K562 (cell line): ENCODE measurements at regions of chr1 and their contacts with region 1.

Region 1: DNA sequence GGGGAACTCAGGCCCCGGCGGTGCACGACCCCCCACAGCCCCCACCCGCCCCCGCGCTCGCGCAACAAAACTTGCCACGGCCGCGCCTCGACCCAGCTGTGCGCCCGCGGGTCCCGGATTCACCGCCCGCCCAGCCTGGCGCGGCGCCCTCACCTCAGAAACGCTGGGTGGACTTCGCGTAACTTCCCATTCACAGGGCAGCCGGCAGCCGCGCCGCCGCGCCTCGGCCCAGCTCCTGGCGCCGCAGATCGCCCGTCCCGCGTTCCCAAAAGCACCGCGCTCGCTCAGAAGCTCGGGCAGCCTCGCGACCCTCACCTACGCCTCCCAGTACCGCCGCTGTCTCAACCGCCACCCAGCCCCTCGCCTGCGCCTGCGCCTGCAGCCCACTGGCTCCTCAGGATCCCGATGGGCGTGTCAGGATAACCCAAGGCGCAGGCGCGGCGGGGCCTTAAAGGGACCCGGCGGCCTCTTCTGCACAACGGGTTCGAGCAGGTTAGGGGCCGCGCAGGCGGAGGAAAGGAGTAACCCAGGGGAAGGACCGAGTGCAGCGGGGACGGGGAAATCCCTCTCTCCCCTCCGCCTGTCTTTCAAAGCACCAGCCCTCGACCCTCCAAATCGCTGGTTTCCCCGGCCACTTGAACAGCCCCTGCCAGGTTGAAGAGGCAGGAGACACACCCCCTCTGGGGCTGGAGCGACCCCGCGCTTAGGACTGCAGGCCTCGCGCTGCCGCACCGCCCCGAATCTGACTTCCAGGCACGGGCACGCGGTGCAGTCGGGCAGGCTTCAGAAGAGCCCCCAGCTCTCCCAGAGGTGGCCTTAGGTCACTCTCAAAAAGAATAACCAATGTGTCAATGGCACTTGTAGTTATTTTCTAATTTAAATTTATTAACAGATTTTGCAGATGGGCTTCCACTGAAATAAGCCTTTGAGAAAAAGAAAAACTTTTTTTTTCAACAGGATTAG is at the start of gene NBPF1:
- DNase-seq: peak; percentile 100
- ATAC-seq: peak; percentile 99
- H3K4me3 ChIP-seq: peak within 1 kb of the TSS; percentile 55
- H3K27ac ChIP-seq: peak within 1 kb of the TSS; percentile 42
- H3K4me1 ChIP-seq: peaks cover 25 to 32% of the 10 kb centered on the region in 2 experiments
- H3K27me3 ChIP-seq: no peaks in the 10 kb centered on the region
- CTCF ChIP-seq: peak in 2 of 3 experiments; percentile 30 to 32; a peak in 4 of 6 replicates
- EP300 ChIP-seq: peak; percentile 61; the same call in 1 of the 2 replicates
- POLR2A ChIP-seq: no peak
- RAD21 ChIP-seq: peak; percentile 19 to 52; a peak in 3 of 4 replicates
- polyA plus RNA-seq, gene NBPF1: 5.2 to 7.9 TPM

Region 2: GRCh38 chr1:16296643-16297042 is 316.8 kb before region 1 on chr1:
- CTCF ChIA-PET with region 1: no interaction called
- POLR2A ChIA-PET with region 1: no interaction called
- in situ Hi-C with region 1: no loop called
- intact Hi-C with region 1: no loop called
- DNase-seq: no peak
- ATAC-seq: no peak
- H3K4me3 ChIP-seq: no peak overlapping the region
- H3K27ac ChIP-seq: no peak overlapping the region
- H3K4me1 ChIP-seq: peaks cover 0 to 3% of the 10 kb centered on the region in 2 experiments; a peak in 1 of 5 replicates
- H3K27me3 ChIP-seq: no peaks in the 10 kb centered on the region
- CTCF ChIP-seq: no peak
- EP300 ChIP-seq: no peak
- POLR2A ChIP-seq: no peak
- RAD21 ChIP-seq: no peak

Region 3: GRCh38 chr1:16521288-16521583 is 92.2 kb before region 1 on chr1:
- CTCF ChIA-PET with region 1: no interaction called
- POLR2A ChIA-PET with region 1: no interaction called
- in situ Hi-C with region 1: loop called (anchors 25 kb)
- intact Hi-C with region 1: loop called (anchors 5 kb)
- DNase-seq: no peak
- ATAC-seq: no peak
- H3K4me3 ChIP-seq: no peak overlapping the region
- H3K27ac ChIP-seq: no peak overlapping the region
- H3K4me1 ChIP-seq: peaks cover 8 to 13% of the 10 kb centered on the region in 2 experiments; a peak in 4 of 5 replicates
- H3K27me3 ChIP-seq: peaks cover 7% of the 10 kb centered on the region in 2 experiments; a peak in 3 of 5 replicates
- CTCF ChIP-seq: no peak
- EP300 ChIP-seq: no peak
- POLR2A ChIP-seq: no peak
- RAD21 ChIP-seq: no peak

Region 4: GRCh38 chr1:16625497-16626408 is 12.3 kb after region 1 on chr1:
- CTCF ChIA-PET with region 1: interaction called, 8 read pairs
- POLR2A ChIA-PET with region 1: interaction called, 22 read pairs
- in situ Hi-C with region 1: no loop called
- intact Hi-C with region 1: no loop called
- DNase-seq: peak in 3 of 4 experiments; percentile 46 to 49 (median 47)
- ATAC-seq: no peak
- H3K4me3 ChIP-seq: no peak overlapping the region
- H3K27ac ChIP-seq: no peak overlapping the region
- H3K4me1 ChIP-seq: peaks cover 4 to 36% of the 10 kb centered on the region in 2 experiments; a peak in 3 of 5 replicates
- H3K27me3 ChIP-seq: no peaks in the 10 kb centered on the region
- CTCF ChIP-seq: 0 out of 6 replicates have a peak, but pooled peaks of 1 of the 3 experiments have one; percentile 2
- EP300 ChIP-seq: no peak
- POLR2A ChIP-seq: no peak; the same call in 1 of the 2 replicates
- RAD21 ChIP-seq: no peak

Region 5: GRCh38 chr1:16913833-16914662 is 300.6 kb after region 1 on chr1:
- CTCF ChIA-PET with region 1: no interaction called
- POLR2A ChIA-PET with region 1: no interaction called
- in situ Hi-C with region 1: loop called (anchors 25 kb)
- intact Hi-C with region 1: no loop called
- DNase-seq: peak; percentile 94 to 99 (median 98)
- ATAC-seq: peak; percentile 98
- H3K4me3 ChIP-seq: peak overlapping the region; percentile 68
- H3K27ac ChIP-seq: peak overlapping the region; percentile 45; the same call in 2 of the 3 replicates
- H3K4me1 ChIP-seq: peaks cover 3 to 21% of the 10 kb centered on the region in 2 experiments; a peak in 3 of 5 replicates
- H3K27me3 ChIP-seq: no peaks in the 10 kb centered on the region
- CTCF ChIP-seq: peak in 1 of 3 experiments; percentile 17; a peak in 1 of 6 replicates
- EP300 ChIP-seq: no peak
- POLR2A ChIP-seq: peak; percentile 50; the same call in 1 of the 2 replicates
- RAD21 ChIP-seq: no peak